ENCODE measurements at regions of chr10 and their contacts with region 1.

Region 1: DNA sequence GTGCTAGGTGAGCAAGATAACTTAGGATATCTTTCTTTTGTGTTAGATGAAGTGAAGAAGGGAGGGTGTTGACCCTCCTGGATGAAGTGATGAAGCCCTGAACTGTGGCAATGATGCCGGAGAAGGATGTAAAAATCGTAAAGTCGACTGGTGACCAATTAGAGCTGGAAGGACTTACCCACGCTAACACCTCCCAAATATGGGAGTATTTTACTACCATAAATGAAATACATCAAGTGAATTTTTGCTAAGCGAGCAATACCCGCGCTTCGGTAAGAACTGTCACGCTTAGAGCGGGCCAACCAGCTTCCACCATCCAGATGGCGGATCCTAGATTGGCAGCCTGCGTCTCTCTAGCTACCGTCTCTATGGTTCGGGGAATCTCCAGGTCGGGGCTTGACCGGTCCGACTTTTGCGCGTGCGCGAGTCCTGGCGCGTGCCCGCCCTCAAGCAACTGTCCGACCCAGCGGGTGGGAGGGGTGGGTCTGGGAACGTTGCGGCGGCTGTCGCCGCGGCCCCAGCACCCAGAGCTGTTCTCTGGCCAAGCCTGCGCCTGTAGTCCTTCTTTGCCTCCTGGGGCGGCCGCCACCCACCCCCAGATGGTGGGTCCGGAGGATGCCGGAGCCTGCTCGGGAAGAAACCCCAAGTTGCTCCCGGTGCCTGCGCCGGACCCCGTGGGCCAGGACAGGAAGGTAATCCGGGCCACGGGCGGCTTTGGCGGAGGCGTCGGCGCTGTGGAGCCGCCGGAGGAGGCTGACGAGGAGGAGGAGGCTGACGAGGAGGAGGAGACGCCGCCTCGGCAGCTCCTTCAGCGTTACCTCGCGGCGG is at the start of gene TBC1D12:
- DNase-seq: peak; percentile 94 to 99 (median 96)

Region 2: DNA sequence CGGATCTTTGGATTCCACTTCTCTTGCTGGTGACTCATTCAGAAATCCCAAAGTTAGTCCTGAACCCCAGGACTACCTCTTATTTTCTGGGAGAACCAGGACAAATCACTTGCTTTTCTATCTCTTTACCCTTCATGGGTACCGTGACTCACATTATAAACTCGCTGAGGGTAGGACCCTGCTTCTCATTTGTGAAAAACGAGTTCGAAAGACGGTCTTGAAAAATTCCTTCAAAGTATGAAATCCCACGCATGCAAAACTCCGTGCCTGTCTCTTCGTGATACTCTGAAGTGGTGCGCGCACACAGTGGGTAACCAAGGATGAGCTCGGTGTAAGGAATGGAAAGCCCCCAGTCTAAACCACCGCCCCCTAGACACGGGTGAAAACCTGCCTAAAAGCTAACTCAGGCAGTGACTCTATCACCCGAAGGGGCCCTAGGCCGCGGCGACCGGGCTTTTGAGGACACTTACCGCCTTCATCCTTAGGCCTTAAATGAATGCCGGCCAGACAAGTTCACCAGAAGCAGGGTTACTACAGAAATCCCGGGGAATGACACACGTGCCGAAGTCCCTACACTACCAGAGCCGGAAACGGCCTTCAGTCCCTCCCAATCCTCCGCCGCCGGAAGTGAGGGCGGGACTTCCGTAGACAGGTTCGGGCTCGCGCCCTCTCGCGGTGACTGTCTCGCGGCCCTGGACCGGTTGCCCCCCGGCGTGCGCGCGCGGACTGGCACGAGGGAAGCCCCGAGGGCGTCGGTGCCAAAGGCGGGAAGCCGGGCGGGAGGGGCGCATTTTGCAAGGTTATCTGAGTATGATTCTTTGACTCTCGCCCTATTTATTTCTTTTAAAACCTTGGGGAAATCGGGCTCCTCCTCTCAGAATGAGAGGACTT is 39.6 kb before region 1 on chr10 and contains the start of gene NOC3L:
- intact Hi-C with region 1: loop called (anchors 1 kb)
- DNase-seq: peak; percentile 91 to 99 (median 97)

Region 3: DNA sequence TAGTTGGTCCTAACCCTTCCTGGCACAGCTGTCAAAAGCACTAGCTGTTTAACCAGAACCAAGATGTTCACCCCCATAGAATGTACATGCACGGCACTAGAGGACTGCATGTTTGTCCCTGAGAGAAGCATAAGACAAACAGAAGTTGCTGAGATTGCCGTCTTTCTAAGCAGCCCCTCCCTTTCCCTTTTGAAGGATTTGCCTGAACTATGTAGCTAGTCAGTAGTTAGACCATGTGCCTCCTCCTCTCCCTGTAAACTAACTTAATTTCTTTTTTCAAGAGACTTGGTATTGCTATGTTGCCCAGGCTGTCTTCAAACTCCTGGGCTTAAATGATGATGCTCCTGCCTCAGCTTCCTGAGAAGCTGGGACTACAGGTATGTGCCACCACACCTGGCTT is 40.8 kb after region 1 on chr10:
- intact Hi-C with region 1: loop called (anchors 5 kb)
- DNase-seq: no peak

Measured in posterior cingulate gyrus (tissue), 11 donors.